ENCODE measurements at regions of chr4 and their contacts with region 1.

Region 1: GRCh38 chr4:1712216-1713002 is at the start of gene SLBP:
- DNase-seq: peak; percentile 100
- ATAC-seq: peak; percentile 89
- H3K4me3 Mint-ChIP-seq: peak within 1 kb of the TSS; percentile 99
- H3K27ac Mint-ChIP-seq: peak within 1 kb of the TSS; percentile 98
- H3K4me1 Mint-ChIP-seq: peaks cover 58% of the 10 kb centered on the region
- H3K27me3 Mint-ChIP-seq: no peaks in the 10 kb centered on the region
- total RNA-seq, gene SLBP: 113 to 134 TPM

Region 2: GRCh38 chr4:1200425-1201035 is 511.9 kb before region 1 on chr4:
- CTCF ChIA-PET with region 1: no interaction called
- POLR2A ChIA-PET with region 1: no interaction called
- intact Hi-C with region 1: loop called in 1 of 2 experiments (anchors 5 kb)
- DNase-seq: peak; percentile 51
- ATAC-seq: no peak
- H3K4me3 Mint-ChIP-seq: peak overlapping the region; percentile 74
- H3K27ac Mint-ChIP-seq: peak overlapping the region; percentile 73
- H3K4me1 Mint-ChIP-seq: peaks cover 40% of the 10 kb centered on the region
- H3K27me3 Mint-ChIP-seq: no peaks in the 10 kb centered on the region

Region 3: DNA sequence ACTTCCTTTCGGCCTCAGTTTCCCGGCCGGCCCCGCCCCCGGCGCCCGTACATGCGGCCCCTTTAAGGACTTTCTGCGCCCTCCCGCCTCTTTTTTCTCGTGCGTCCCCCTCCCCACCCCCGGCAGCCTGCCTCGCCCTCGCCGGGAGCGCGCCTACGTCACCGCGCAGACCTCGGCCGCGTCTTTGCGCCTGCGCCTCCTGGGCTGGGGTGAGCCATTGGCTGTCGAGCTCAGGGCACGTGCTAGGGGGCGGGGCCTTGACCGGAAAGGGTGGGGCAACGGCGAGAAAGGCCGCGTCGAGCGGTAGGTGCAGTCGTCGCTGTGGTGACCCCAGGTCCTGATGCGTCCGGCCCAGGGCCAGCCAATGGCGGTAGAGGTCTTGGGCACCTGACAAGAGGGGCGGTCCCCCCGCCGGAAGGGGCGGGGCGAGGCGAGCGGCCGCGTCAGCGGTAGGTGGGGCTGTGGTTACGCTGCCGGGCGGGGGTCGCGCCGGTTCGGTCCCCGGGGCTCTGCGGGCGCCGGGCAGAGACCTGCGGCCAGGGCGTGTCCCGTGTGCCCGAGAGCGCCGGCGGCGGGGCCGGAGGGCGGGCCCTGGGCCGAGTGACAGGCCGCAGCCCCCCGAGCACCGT is 365.5 kb before region 1 on chr4 and contains the start of gene UVSSA:
- CTCF ChIA-PET with region 1: interaction called, 3 read pairs
- POLR2A ChIA-PET with region 1: no interaction called
- intact Hi-C with region 1: loop called in 1 of 2 experiments (anchors 1 kb)
- DNase-seq: peak; percentile 100
- ATAC-seq: peak; percentile 95
- H3K4me3 Mint-ChIP-seq: peak within 1 kb of the TSS; percentile 86
- H3K27ac Mint-ChIP-seq: peak within 1 kb of the TSS; percentile 87
- H3K4me1 Mint-ChIP-seq: peaks cover 47% of the 10 kb centered on the region
- H3K27me3 Mint-ChIP-seq: no peaks in the 10 kb centered on the region
- total RNA-seq, gene UVSSA: 14.8 to 18.1 TPM

Region 4: DNA sequence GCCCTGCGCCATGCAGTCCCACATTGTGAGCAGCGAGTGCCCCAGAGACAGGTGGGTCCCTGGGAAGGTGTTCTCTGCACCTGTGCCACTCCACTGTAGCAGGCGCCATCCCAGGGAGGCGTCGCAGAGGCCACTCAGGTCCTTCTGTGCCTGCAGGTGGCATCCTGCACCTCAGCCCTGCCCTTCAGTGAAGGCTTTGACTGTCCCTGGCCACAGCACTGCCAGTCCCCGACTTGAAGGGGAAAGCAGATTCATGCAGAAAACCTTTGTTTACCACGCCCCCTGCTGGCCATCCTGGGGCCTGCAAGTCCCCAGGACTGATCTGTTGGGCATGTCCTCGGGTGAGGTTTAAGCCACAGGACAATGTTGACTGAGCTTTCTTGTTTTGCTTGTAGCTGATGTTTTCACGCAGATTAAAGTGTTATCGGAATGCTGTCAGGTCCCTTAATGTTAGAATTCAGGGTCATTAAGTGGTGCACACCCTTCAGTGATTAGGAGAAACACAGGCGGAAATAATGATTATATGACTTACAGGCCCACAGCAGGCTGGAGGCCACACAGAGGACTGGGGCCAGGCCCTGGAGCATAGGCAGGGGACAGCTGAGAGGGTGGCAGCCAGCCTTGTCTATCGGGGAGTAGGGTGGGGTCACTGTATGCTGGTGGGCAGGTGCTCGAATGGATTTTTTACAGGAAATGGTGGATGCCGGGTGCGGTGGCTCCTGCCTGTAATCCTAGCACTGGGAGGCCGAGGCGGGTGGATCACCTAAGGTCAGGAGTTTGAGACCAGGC is 13.9 kb after region 1 on chr4:
- CTCF ChIA-PET with region 1: interaction called, 26 read pairs
- POLR2A ChIA-PET with region 1: interaction called, 89 read pairs
- intact Hi-C with region 1: loop called (anchors 1 kb)
- DNase-seq: peak; percentile 93
- ATAC-seq: peak; percentile 10
- H3K4me3 Mint-ChIP-seq: no peak overlapping the region
- H3K27ac Mint-ChIP-seq: peak overlapping the region; percentile 69
- H3K4me1 Mint-ChIP-seq: peaks cover 76% of the 10 kb centered on the region
- H3K27me3 Mint-ChIP-seq: no peaks in the 10 kb centered on the region

Region 5: GRCh38 chr4:1736812-1737211 is 24.4 kb after region 1 on chr4:
- CTCF ChIA-PET with region 1: no interaction called
- POLR2A ChIA-PET with region 1: no interaction called
- intact Hi-C with region 1: no loop called
- DNase-seq: no peak
- ATAC-seq: no peak
- H3K4me3 Mint-ChIP-seq: no peak overlapping the region
- H3K27ac Mint-ChIP-seq: no peak overlapping the region
- H3K4me1 Mint-ChIP-seq: peaks cover under 1% of the 10 kb centered on the region
- H3K27me3 Mint-ChIP-seq: no peaks in the 10 kb centered on the region

Region 6: DNA sequence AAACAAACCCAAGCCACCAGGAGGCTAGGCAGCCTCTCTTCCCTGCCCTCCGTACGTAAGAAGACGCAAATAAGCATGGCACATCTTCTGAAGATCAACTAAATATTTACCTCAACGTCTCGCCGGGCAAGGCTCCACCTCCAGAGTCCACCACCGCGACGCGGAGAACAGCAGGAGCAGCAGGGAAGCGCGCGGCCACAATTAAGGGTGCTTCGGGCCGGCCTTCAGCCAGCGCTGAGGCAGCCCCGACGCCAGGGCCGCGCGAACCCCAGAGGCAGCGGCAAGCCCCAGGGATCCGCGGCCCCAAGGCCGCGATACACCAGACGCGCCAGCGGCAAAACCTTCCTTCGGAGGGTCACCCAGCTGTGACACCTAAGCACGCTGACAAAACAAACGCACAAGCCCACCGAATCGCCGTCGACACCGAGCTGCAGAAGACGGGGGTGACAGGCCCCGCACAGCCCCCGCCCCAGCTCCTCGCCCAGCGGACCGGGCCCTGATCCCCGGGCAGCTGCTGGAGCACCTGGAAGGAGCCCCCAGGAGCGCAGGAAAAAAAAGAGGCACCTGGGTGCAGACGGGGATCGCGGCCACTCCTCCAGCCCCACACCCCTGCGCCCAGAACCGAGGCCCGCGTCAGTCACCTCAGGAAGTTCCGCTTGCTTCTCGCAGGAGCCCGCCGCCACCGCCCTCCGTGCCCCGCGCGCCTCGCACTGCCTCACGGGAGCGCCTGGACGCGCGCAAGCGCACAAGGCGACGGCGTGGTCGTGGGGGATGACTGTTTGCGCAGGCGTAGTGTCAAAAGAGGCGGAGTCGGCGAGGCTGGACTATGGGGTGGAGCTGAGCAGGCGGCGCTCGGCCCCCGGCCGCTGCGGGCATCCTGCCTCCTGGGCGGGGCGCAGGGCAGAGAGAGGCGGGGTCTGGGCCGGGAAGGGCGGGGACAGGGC is 529.3 kb after region 1 on chr4 and contains the starts of genes HAUS3 and POLN:
- CTCF ChIA-PET with region 1: no interaction called
- POLR2A ChIA-PET with region 1: no interaction called
- intact Hi-C with region 1: loop called in 1 of 2 experiments (anchors 2 kb)
- DNase-seq: peak; percentile 99
- ATAC-seq: peak; percentile 97
- H3K4me3 Mint-ChIP-seq: peak within 1 kb of the TSS; percentile 91
- H3K27ac Mint-ChIP-seq: peak within 1 kb of the TSS; percentile 88
- H3K4me1 Mint-ChIP-seq: peaks cover 54% of the 10 kb centered on the region
- H3K27me3 Mint-ChIP-seq: no peaks in the 10 kb centered on the region
- total RNA-seq, gene HAUS3: 14.6 to 18.6 TPM
- total RNA-seq, gene POLN: 2.3 to 3.2 TPM

Region 7: GRCh38 chr4:2536193-2537010 is 824.0 kb after region 1 on chr4 and contains the start of gene FAM193A:
- CTCF ChIA-PET with region 1: no interaction called
- POLR2A ChIA-PET with region 1: no interaction called
- intact Hi-C with region 1: loop called in 1 of 2 experiments (anchors 1 kb)
- DNase-seq: peak; percentile 100
- ATAC-seq: peak; percentile 97
- H3K4me3 Mint-ChIP-seq: peak within 1 kb of the TSS; percentile 87
- H3K27ac Mint-ChIP-seq: peak within 1 kb of the TSS; percentile 88
- H3K4me1 Mint-ChIP-seq: peaks cover 24% of the 10 kb centered on the region
- H3K27me3 Mint-ChIP-seq: no peaks in the 10 kb centered on the region
- total RNA-seq, gene FAM193A: 22.1 to 30.1 TPM

Measured in activated CD4-positive, alpha-beta T cell treated with anti-CD3 and anti-CD28 coated beads for 36 hours (primary cell).